Naive thymus-derived CD4-positive, alpha-beta T cell (primary cell): ENCODE measurements at regions of chr3 and their contacts with region 1.

Region 1: GRCh38 chr3:46538803-46539442 is 27.2 kb downstream of the LRRC2 start:
- DNase-seq: peak; percentile 53 to 92 (median 89)
- ATAC-seq: peak; percentile 94
- H3K4me3 ChIP-seq: peak overlapping the region; percentile 27
- H3K4me3 Mint-ChIP-seq: peak overlapping the region; percentile 46 to 86 (median 74)
- H3K27ac ChIP-seq: peak overlapping the region; percentile 68
- H3K27ac Mint-ChIP-seq: peak overlapping the region; percentile 86 to 97 (median 95)
- H3K4me1 ChIP-seq: peaks cover 27 to 43% of the 10 kb centered on the region in 2 donors
- H3K4me1 Mint-ChIP-seq: peaks cover 19 to 74% (median 56%) of the 10 kb centered on the region in 7 donors
- H3K27me3 ChIP-seq: no peaks in the 10 kb centered on the region
- H3K27me3 Mint-ChIP-seq: peaks cover 0 to 31% (median 6%) of the 10 kb centered on the region in 5 donors

Region 2: DNA sequence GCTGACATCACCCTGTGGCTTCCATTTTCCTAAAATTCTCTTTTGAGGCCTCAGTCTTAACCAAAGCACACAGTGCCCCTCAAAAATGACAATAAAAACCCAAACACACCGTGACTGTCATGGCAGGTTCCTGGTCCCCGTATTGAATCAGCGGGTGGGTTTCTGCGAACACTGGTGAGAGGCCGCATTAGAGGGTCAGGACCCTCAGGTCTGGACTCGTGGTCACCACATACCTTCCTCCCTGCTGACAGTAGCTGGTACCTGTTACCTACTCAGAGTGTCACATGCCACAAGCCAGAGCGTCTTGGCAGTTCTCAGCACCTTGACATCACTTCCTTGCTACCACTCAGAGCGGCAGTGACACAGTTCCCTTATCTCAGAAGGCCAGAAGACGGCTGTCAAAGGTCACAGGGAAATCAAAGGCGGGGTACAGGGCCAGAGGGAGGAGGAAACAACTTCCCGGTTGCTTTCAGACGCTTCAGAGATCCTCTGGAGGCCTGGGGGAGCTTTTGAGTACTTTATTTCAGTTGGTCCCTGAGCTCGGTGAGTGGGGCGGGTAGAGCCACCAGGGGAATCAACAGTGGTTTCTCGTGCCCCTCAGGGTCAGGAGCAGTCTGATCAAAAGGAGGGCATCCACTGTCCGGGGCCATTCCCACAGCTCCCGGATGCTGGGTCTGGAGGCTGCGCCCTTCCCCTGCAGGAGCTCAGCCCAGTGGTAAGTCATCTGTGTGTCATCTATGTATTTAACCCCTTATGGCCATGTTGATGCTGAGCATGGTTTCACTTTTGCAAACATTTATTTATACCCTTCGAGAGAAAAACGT is 131.9 kb before region 1 on chr3 and contains the starts of genes CCR5AS and CCRL2:
- CTCF ChIA-PET with region 1: no interaction called
- POLR2A ChIA-PET with region 1: no interaction called
- intact Hi-C with region 1: loop called in 1 of 2 experiments (anchors 2 kb)
- DNase-seq: peak; percentile 9 to 50 (median 31)
- ATAC-seq: peak; percentile 85
- H3K4me3 ChIP-seq: peak within 1 kb of the TSS; percentile 55
- H3K4me3 Mint-ChIP-seq: peak within 1 kb of the TSS; percentile 72 to 88 (median 84)
- H3K27ac ChIP-seq: peak within 1 kb of the TSS; percentile 57
- H3K27ac Mint-ChIP-seq: peak within 1 kb of the TSS; percentile 76 to 95 (median 86)
- H3K4me1 ChIP-seq: peaks cover 5 to 10% of the 10 kb centered on the region in 2 donors
- H3K4me1 Mint-ChIP-seq: peaks cover 11 to 37% (median 33%) of the 10 kb centered on the region in 7 donors
- H3K27me3 ChIP-seq: no peaks in the 10 kb centered on the region
- H3K27me3 Mint-ChIP-seq: peaks cover 0 to 23% (median 0%) of the 10 kb centered on the region in 5 donors
- total RNA-seq, gene CCRL2: 0.35 to 20.5 (median 5.0) TPM

Region 3: GRCh38 chr3:46496741-46497554 is 42.0 kb before region 1 on chr3:
- CTCF ChIA-PET with region 1: interaction called, 7 read pairs
- POLR2A ChIA-PET with region 1: interaction called, 6 read pairs
- intact Hi-C with region 1: loop called in 1 of 2 experiments (anchors 1 kb)
- DNase-seq: peak in 7 of 9 donors; percentile 15 to 46 (median 31)
- ATAC-seq: peak; percentile 44
- H3K4me3 ChIP-seq: no peak overlapping the region
- H3K4me3 Mint-ChIP-seq: no peak overlapping the region
- H3K27ac ChIP-seq: no peak overlapping the region
- H3K27ac Mint-ChIP-seq: peak overlapping the region in 2 of 9 donors; percentile 24 to 83
- H3K4me1 ChIP-seq: peaks cover 5% of the 10 kb centered on the region in 2 donors
- H3K4me1 Mint-ChIP-seq: peaks cover 5 to 20% (median 9%) of the 10 kb centered on the region in 7 donors
- H3K27me3 ChIP-seq: no peaks in the 10 kb centered on the region
- H3K27me3 Mint-ChIP-seq: peaks cover 0 to 9% (median 0%) of the 10 kb centered on the region in 5 donors

Region 4: DNA sequence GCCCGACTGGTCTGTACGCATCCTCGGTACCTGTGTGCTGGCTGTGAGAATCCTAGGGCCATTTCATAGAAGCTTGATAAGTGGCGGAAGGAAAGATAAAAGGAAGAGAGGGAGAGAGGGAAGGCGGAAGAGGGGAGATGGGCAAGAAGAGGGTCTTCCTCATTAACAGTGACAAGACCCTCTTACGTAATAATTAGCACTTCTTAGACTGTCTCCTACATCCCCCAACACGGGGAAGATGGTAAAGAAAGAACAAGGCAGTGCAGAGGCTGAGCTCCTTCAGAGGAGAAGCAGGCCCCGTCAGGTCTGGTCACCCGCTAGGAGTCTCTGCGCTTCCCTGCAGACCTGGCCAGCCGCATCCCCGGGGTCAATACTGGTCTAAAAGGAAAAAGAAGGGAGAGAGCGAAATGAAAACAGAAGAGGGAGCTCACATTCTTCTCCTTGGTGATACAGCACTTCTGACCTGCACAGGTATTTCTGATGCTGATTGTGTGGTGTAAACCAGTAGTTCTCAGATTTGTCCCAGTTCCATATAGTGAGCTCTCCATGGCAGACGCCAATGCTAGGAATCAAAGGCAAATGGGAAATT is 54.4 kb after region 1 on chr3:
- CTCF ChIA-PET with region 1: no interaction called
- POLR2A ChIA-PET with region 1: no interaction called
- intact Hi-C with region 1: no loop called
- DNase-seq: no peak
- ATAC-seq: no peak
- H3K4me3 ChIP-seq: no peak overlapping the region
- H3K4me3 Mint-ChIP-seq: no peak overlapping the region
- H3K27ac ChIP-seq: no peak overlapping the region
- H3K27ac Mint-ChIP-seq: no peak overlapping the region
- H3K4me1 ChIP-seq: no peaks in the 10 kb centered on the region
- H3K4me1 Mint-ChIP-seq: peaks cover 0 to 2% (median 0%) of the 10 kb centered on the region in 7 donors
- H3K27me3 ChIP-seq: no peaks in the 10 kb centered on the region
- H3K27me3 Mint-ChIP-seq: peaks cover 0 to 22% (median 0%) of the 10 kb centered on the region in 5 donors

Region 5: DNA sequence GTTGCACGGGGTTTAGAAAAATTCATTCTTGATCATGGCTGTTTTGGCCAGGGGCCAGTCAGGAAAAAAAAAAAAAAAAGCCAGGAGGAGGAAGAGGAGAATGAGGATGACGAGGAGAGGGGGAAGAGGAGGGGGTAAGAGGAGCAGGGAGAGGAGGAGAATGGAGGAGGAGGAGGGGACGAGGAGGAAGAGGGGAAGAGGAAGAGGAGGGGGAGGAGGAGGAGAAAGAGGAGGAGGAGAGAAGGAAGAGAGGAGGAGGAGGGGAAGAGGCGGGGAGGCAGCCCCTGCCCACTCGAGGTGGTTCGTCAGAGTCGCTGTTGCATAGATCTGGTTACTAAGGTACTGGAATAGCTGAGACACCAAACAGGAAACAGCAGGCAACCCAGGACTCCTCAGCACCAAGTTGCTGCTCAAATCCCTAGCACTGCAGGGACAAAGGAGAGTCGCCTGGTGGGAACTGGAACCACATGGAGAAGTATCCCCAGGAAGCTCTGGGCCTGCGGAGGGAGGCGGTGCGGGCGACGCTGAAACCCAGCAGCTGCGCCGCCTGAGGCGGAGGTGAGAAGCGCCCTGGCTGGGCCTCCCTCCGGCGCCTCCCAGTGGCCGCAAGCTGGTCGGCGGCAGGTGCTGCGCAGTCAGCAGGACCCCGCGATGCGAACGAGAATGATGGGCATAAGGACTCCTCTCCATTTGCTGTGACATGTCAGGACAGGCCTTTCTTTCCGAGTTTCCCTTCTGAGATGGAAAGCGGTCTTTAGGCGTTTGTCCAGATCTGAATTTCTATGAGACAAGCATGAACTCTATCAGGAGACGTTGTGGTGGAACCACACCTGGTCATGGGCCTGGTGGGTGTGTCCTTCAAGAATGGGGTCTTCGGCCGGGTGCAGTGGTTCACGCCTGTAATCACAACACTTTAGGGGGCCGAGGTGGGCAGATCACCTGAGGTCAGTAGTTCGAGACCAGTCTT is 90.9 kb after region 1 on chr3:
- CTCF ChIA-PET with region 1: interaction called, 11 read pairs
- POLR2A ChIA-PET with region 1: no interaction called
- intact Hi-C with region 1: loop called in 1 of 2 experiments (anchors 1 kb)
- DNase-seq: peak; percentile 61 to 82 (median 77)
- ATAC-seq: peak; percentile 98
- H3K4me3 ChIP-seq: peak overlapping the region; percentile 73
- H3K4me3 Mint-ChIP-seq: peak overlapping the region; percentile 67 to 86 (median 79)
- H3K27ac ChIP-seq: peak overlapping the region; percentile 62
- H3K27ac Mint-ChIP-seq: peak overlapping the region; percentile 76 to 97 (median 90)
- H3K4me1 ChIP-seq: peaks cover 9 to 29% of the 10 kb centered on the region in 2 donors
- H3K4me1 Mint-ChIP-seq: peaks cover 13 to 42% (median 30%) of the 10 kb centered on the region in 7 donors
- H3K27me3 ChIP-seq: no peaks in the 10 kb centered on the region
- H3K27me3 Mint-ChIP-seq: peaks cover 0 to 17% (median 0%) of the 10 kb centered on the region in 5 donors